ENCODE measurements at regions of chr2 and their contacts with region 1.

Region 1: GRCh38 chr2:55575591-55575990 is 41.8 kb downstream of the PPP4R3B start:
- DNase-seq: no peak
- H3K4me3 Mint-ChIP-seq: no peak overlapping the region
- H3K27ac Mint-ChIP-seq: no peak overlapping the region
- H3K4me1 Mint-ChIP-seq: no peaks in the 10 kb centered on the region
- H3K27me3 Mint-ChIP-seq: no peaks in the 10 kb centered on the region
- CTCF ChIP-seq: no peak

Region 2: DNA sequence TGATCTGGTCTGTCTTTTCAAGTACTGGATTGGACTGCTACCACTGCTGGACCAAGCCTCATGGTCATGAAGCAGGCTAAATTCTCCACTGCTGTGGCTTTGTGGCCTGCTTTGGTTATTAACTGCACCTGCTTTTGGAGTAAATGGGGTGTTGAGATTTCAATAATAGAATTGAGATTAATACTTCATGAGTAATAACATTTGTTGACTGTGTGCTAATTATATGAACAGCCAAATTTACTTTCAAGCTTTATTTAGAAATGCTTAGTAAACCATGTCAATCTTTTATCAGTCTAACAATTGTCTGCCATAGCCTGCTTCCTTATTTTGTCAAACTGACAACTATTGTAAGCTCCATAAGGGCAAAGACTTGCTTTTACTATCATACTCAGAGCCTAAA is 279.2 kb before region 1 on chr2:
- CTCF ChIA-PET with region 1: no interaction called
- intact Hi-C with region 1: loop called (anchors 10 kb)
- DNase-seq: no peak
- H3K4me3 Mint-ChIP-seq: no peak overlapping the region
- H3K27ac Mint-ChIP-seq: no peak overlapping the region
- H3K4me1 Mint-ChIP-seq: no peaks in the 10 kb centered on the region
- H3K27me3 Mint-ChIP-seq: no peaks in the 10 kb centered on the region
- CTCF ChIP-seq: no peak

Measured in Calu3 (cell line).